ENCODE measurements at regions of chr13 and their contacts with region 1.

Region 1: GRCh38 chr13:27980280-27980998 is 8.1 kb downstream of the URAD start:
- DNase-seq: no peak
- H3K4me3 ChIP-seq: no peak overlapping the region
- H3K27ac ChIP-seq: no peak overlapping the region
- H3K4me1 ChIP-seq: no peaks in the 10 kb centered on the region
- H3K27me3 ChIP-seq: peaks cover 79% of the 10 kb centered on the region
- CTCF ChIP-seq: no peak
- POLR2A ChIP-seq: no peak

Region 2: GRCh38 chr13:27362064-27362883 is 618.2 kb before region 1 on chr13:
- intact Hi-C with region 1: loop called (anchors 5 to 10 kb)
- DNase-seq: peak; percentile 67 to 94 (median 83)
- H3K4me3 ChIP-seq: peak overlapping the region in 2 of 4 donors; percentile 10 to 47
- H3K27ac ChIP-seq: no peak overlapping the region
- H3K4me1 ChIP-seq: peaks cover 0 to 6% of the 10 kb centered on the region in 2 donors
- H3K27me3 ChIP-seq: peaks cover 6% of the 10 kb centered on the region
- CTCF ChIP-seq: peak; percentile 82 to 93 (median 90)
- POLR2A ChIP-seq: no peak

Region 3: GRCh38 chr13:27869436-27870095 is 110.9 kb before region 1 on chr13:
- intact Hi-C with region 1: no loop called
- DNase-seq: no peak
- H3K4me3 ChIP-seq: no peak overlapping the region
- H3K27ac ChIP-seq: no peak overlapping the region
- H3K4me1 ChIP-seq: no peaks in the 10 kb centered on the region
- H3K27me3 ChIP-seq: peaks cover 5% of the 10 kb centered on the region
- CTCF ChIP-seq: no peak
- POLR2A ChIP-seq: no peak

Region 4: GRCh38 chr13:28173793-28174192 is 193.4 kb after region 1 on chr13:
- intact Hi-C with region 1: no loop called
- DNase-seq: no peak
- H3K4me3 ChIP-seq: no peak overlapping the region
- H3K27ac ChIP-seq: no peak overlapping the region
- H3K4me1 ChIP-seq: no peaks in the 10 kb centered on the region
- H3K27me3 ChIP-seq: no peaks in the 10 kb centered on the region
- CTCF ChIP-seq: no peak
- POLR2A ChIP-seq: no peak

Region 5: DNA sequence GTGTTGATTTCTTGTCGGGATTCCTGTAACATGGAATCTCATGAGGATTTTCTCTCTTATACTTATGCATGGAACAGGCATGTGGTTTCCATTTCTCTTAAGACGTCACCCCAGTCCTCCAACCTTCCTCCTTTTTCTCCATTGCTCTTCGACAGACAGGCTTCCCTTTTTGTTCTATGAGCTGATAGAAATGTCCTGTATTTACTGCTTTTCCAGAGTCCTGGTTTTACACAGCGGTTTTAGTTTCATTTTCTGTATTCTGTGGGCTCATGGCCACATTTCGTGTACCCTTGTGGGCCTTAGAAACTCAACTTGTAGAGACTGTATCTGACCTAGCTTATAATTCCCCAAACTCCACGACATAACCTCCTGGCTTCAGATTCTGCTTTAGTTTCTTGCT is 271.0 kb after region 1 on chr13:
- intact Hi-C with region 1: no loop called
- DNase-seq: no peak
- H3K4me3 ChIP-seq: peak overlapping the region in 1 of 4 donors; percentile 5
- H3K27ac ChIP-seq: no peak overlapping the region
- H3K4me1 ChIP-seq: peaks cover 0 to 10% of the 10 kb centered on the region in 2 donors
- H3K27me3 ChIP-seq: no peaks in the 10 kb centered on the region
- CTCF ChIP-seq: no peak
- POLR2A ChIP-seq: no peak

Measured in adrenal gland (tissue), 19 donors.